Activated CD8-positive, alpha-beta T cell treated with anti-CD3 and anti-CD28 coated beads for 36 hours (primary cell): ENCODE measurements at regions of chr4 and their contacts with region 1.

Region 1: GRCh38 chr4:176340871-176341685 is 21.3 kb downstream of the SPCS3 start:
- DNase-seq: no peak
- ATAC-seq: peak; percentile 65
- H3K4me3 Mint-ChIP-seq: no peak overlapping the region
- H3K27ac Mint-ChIP-seq: no peak overlapping the region
- H3K4me1 Mint-ChIP-seq: peaks cover 5% of the 10 kb centered on the region
- H3K27me3 Mint-ChIP-seq: no peaks in the 10 kb centered on the region
- CTCF ChIP-seq: peak; percentile 71

Region 2: DNA sequence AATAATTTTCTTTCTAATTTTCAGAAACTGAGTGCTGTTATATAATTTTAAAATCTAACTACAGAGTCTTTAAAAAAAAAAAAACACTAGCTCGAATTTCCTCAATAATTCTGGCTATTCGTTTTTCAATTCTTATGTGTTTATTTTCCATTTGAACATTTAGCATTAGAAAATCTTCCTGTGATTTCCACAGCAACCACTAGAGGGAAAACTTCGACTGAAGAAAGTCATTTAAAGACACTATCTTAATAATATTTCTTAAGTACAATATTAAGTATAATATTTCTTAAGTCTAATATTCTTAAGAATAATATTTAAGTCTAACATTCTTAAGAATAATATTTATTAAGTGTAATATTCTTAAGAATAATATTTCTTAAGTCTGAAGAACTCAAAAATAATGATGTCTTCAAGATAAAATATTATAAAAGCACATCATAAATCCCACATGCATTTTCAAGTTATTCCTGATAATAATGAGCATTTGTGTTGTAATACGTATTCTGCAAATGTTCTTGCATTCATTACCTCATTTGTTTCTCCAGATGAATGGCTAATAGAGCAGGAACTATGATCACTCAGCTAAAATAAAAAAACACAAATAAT is 393.9 kb before region 1 on chr4:
- CTCF ChIA-PET with region 1: interaction called, 7 read pairs
- POLR2A ChIA-PET with region 1: no interaction called
- intact Hi-C with region 1: loop called (anchors 5 kb)
- DNase-seq: no peak
- ATAC-seq: no peak
- H3K4me3 Mint-ChIP-seq: no peak overlapping the region
- H3K27ac Mint-ChIP-seq: no peak overlapping the region
- H3K4me1 Mint-ChIP-seq: peaks cover 3% of the 10 kb centered on the region
- H3K27me3 Mint-ChIP-seq: peaks cover 5% of the 10 kb centered on the region
- CTCF ChIP-seq: peak; percentile 58

Region 3: GRCh38 chr4:176034499-176034898 is 306.6 kb before region 1 on chr4:
- CTCF ChIA-PET with region 1: interaction called, 14 read pairs
- POLR2A ChIA-PET with region 1: interaction called, 3 read pairs
- intact Hi-C with region 1: loop called (anchors 10 kb)
- DNase-seq: no peak
- ATAC-seq: no peak
- H3K4me3 Mint-ChIP-seq: no peak overlapping the region
- H3K27ac Mint-ChIP-seq: no peak overlapping the region
- H3K4me1 Mint-ChIP-seq: peaks cover 2% of the 10 kb centered on the region
- H3K27me3 Mint-ChIP-seq: no peaks in the 10 kb centered on the region
- CTCF ChIP-seq: no peak

Region 4: GRCh38 chr4:176150356-176150682 is 190.8 kb before region 1 on chr4:
- CTCF ChIA-PET with region 1: interaction called, 29 read pairs
- POLR2A ChIA-PET with region 1: no interaction called
- intact Hi-C with region 1: loop called (anchors 5 kb)
- DNase-seq: no peak
- ATAC-seq: no peak
- H3K4me3 Mint-ChIP-seq: no peak overlapping the region
- H3K27ac Mint-ChIP-seq: no peak overlapping the region
- H3K4me1 Mint-ChIP-seq: no peaks in the 10 kb centered on the region
- H3K27me3 Mint-ChIP-seq: no peaks in the 10 kb centered on the region
- CTCF ChIP-seq: no peak